A673 (cell line): ENCODE measurements at regions of chr20 and their contacts with region 1.

Region 1: GRCh38 chr20:25195014-25195961 is at the start of gene ENTPD6:
- DNase-seq: peak; percentile 95
- H3K4me3 ChIP-seq: peak within 1 kb of the TSS; percentile 85
- H3K27ac ChIP-seq: peak within 1 kb of the TSS; percentile 87
- H3K4me1 ChIP-seq: no peaks in the 10 kb centered on the region
- H3K27me3 ChIP-seq: peaks cover 10% of the 10 kb centered on the region
- CTCF ChIP-seq: peak; percentile 24; the same call in 1 of the 2 replicates
- total RNA-seq, gene ENTPD6: 50.2 and 53.2 TPM in 2 replicates

Region 2: GRCh38 chr20:24303381-24303780 is 891.9 kb before region 1 on chr20:
- CTCF ChIA-PET with region 1: no interaction called
- POLR2A ChIA-PET with region 1: no interaction called
- intact Hi-C with region 1: no loop called
- DNase-seq: peak; percentile 12
- H3K4me3 ChIP-seq: no peak overlapping the region
- H3K27ac ChIP-seq: no peak overlapping the region
- H3K4me1 ChIP-seq: no peaks in the 10 kb centered on the region
- H3K27me3 ChIP-seq: no peaks in the 10 kb centered on the region
- CTCF ChIP-seq: 0 out of 2 replicates have a peak, but pooled peaks have one; percentile 28

Region 3: GRCh38 chr20:25057234-25058050 is 137.8 kb before region 1 on chr20:
- CTCF ChIA-PET with region 1: no interaction called
- POLR2A ChIA-PET with region 1: no interaction called
- intact Hi-C with region 1: no loop called
- DNase-seq: peak; percentile 44
- H3K4me3 ChIP-seq: peak overlapping the region; percentile 68
- H3K27ac ChIP-seq: peak overlapping the region; percentile 38
- H3K4me1 ChIP-seq: peaks cover 15% of the 10 kb centered on the region
- H3K27me3 ChIP-seq: peaks cover 29% of the 10 kb centered on the region
- CTCF ChIP-seq: no peak

Region 4: GRCh38 chr20:25372584-25373336 is 177.5 kb after region 1 on chr20:
- CTCF ChIA-PET with region 1: no interaction called
- POLR2A ChIA-PET with region 1: no interaction called
- intact Hi-C with region 1: no loop called
- DNase-seq: no peak
- H3K4me3 ChIP-seq: no peak overlapping the region
- H3K27ac ChIP-seq: no peak overlapping the region
- H3K4me1 ChIP-seq: no peaks in the 10 kb centered on the region
- H3K27me3 ChIP-seq: no peaks in the 10 kb centered on the region
- CTCF ChIP-seq: no peak

Region 5: DNA sequence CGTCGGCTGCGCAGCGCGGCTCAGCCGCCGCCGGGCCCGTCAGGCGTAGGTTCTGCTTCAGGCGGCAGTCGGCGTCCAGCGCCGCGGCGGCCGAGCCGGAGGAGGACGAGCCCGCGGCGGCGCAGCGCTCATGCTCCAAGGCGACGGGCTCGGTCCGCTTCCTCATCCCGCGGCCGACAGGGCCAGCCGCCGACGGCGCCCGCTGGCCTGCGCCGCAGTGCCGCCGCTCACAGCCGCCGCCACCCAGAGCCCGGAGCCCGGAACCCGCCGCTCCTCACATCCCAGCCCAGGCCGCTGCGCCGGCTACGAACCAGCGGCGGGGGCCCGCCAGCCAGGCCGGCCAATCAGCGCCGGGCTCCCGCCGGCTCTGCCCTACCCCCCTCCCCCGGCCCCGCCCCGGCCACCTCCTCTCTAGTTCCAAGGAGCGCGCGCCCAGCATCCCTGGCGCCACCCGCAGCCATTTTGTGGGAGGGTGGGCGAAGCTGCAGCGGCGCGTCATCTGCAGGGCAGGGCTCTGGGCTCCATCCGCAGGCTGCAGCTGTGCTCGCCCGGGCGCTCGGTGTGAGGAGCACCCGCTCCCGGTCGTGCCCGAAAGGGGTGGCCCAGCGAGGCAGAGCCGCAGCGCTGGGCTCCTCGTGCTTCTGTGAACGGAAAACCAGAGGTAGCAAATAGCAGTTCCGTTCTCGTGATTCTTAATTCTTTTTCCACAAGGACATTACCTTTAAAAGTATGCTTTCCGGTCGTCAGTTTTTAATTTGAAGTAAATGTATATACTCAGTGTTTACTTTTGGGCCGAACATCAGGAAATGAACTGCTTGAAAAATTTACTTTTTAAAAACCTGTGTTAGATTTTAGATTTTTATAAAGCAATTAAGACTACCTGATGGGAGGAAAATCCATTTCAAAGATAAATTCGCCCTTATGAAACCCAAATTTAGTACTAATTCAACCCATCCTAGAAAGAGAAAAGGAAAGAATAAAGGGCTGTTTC is 195.5 kb after region 1 on chr20 and contains the start of gene ABHD12:
- CTCF ChIA-PET with region 1: no interaction called
- POLR2A ChIA-PET with region 1: no interaction called
- intact Hi-C with region 1: loop called (anchors 10 kb)
- DNase-seq: peak; percentile 99
- H3K4me3 ChIP-seq: peak within 1 kb of the TSS; percentile 100
- H3K27ac ChIP-seq: peak within 1 kb of the TSS; percentile 87
- H3K4me1 ChIP-seq: peaks cover 11% of the 10 kb centered on the region
- H3K27me3 ChIP-seq: no peaks in the 10 kb centered on the region
- CTCF ChIP-seq: no peak
- total RNA-seq, gene ABHD12: 39.8 and 40.6 TPM in 2 replicates

Region 6: GRCh38 chr20:25623736-25624499 is 428.6 kb after region 1 on chr20 and contains the start of gene NANP:
- CTCF ChIA-PET with region 1: no interaction called
- POLR2A ChIA-PET with region 1: no interaction called
- intact Hi-C with region 1: no loop called
- DNase-seq: peak; percentile 99
- H3K4me3 ChIP-seq: peak within 1 kb of the TSS; percentile 98
- H3K27ac ChIP-seq: peak within 1 kb of the TSS; percentile 93
- H3K4me1 ChIP-seq: peaks cover 8% of the 10 kb centered on the region
- H3K27me3 ChIP-seq: no peaks in the 10 kb centered on the region
- CTCF ChIP-seq: 0 out of 2 replicates have a peak, but pooled peaks have one; percentile 12
- total RNA-seq, gene NANP: 13.6 and 15.9 TPM in 2 replicates